Caco-2 (cell line): ENCODE measurements at regions of chr5 and their contacts with region 1.

Region 1: GRCh38 chr5:180810210-180810958 is 7.8 kb upstream of the MGAT1 start:
- DNase-seq: peak; percentile 96 to 97
- H3K4me3 ChIP-seq: peak overlapping the region; percentile 64
- H3K4me3 Mint-ChIP-seq: peak overlapping the region; percentile 84
- H3K27ac Mint-ChIP-seq: peak overlapping the region; percentile 66
- H3K4me1 ChIP-seq: peaks cover 42% of the 10 kb centered on the region
- H3K4me1 Mint-ChIP-seq: peaks cover 62% of the 10 kb centered on the region
- H3K27me3 ChIP-seq: no peaks in the 10 kb centered on the region
- H3K27me3 Mint-ChIP-seq: no peaks in the 10 kb centered on the region
- CTCF ChIP-seq: no peak

Region 2: DNA sequence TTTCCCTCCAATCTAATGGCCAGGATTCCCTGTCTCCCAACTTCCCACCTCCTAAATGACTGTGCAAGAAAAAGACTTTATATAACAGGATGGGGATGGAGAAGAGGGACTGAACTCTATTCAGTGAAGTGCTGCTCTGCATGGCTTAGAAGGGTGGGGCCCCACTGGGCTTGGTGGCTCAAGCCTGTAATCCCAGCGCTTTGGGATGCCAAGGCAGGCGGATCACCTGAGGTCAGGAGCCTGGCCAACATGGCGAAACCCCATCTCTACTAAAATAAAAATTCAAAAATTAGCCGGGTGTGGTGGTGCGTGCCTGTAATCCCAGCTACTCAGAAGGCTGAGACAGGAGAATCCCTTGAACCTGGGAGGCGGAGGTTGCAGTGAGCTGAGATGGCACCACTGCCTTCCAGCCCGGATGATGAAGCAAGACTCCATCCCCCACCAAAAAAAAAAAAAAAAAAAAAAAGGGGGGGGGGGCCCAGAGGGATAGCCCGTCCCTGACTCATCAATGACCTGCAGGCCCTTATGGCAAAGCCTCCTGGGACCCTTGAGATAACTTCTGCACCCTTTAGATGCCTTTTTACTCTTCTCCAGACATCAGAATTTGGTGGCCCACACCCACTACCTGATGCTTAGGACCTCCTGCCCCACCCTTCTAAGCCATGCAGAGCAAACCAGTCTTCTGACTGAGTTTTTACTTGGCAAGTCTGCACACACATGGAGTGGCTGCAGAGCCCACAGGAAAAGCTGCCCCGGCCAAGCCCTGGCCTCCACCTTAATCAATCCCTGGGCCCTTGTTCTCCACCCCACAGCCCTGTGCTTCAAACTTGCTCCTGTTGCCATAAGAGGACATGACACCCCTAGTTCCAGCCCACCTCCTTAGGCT is 13.2 kb before region 1 on chr5:
- CTCF ChIA-PET with region 1: interaction called, 3 read pairs
- POLR2A ChIA-PET with region 1: interaction called, 12 read pairs
- intact Hi-C with region 1: loop called (anchors 1 kb)
- DNase-seq: no peak
- H3K4me3 ChIP-seq: no peak overlapping the region
- H3K4me3 Mint-ChIP-seq: no peak overlapping the region
- H3K27ac Mint-ChIP-seq: no peak overlapping the region
- H3K4me1 ChIP-seq: peaks cover 29% of the 10 kb centered on the region
- H3K4me1 Mint-ChIP-seq: peaks cover 27% of the 10 kb centered on the region
- H3K27me3 ChIP-seq: no peaks in the 10 kb centered on the region
- H3K27me3 Mint-ChIP-seq: no peaks in the 10 kb centered on the region
- CTCF ChIP-seq: no peak

Region 3: GRCh38 chr5:180831139-180832048 is 21.0 kb after region 1 on chr5:
- CTCF ChIA-PET with region 1: no interaction called
- POLR2A ChIA-PET with region 1: interaction called, 13 read pairs
- intact Hi-C with region 1: loop called (anchors 2 kb)
- DNase-seq: peak; percentile 83 to 89
- H3K4me3 ChIP-seq: peak overlapping the region; percentile 76
- H3K4me3 Mint-ChIP-seq: peak overlapping the region; percentile 97
- H3K27ac Mint-ChIP-seq: peak overlapping the region; percentile 98
- H3K4me1 ChIP-seq: peaks cover 14% of the 10 kb centered on the region
- H3K4me1 Mint-ChIP-seq: peaks cover 17% of the 10 kb centered on the region
- H3K27me3 ChIP-seq: no peaks in the 10 kb centered on the region
- H3K27me3 Mint-ChIP-seq: no peaks in the 10 kb centered on the region
- CTCF ChIP-seq: peak in 1 of 2 experiments; percentile 8

Region 4: GRCh38 chr5:180874804-180875582 is 64.6 kb after region 1 on chr5:
- CTCF ChIA-PET with region 1: no interaction called
- POLR2A ChIA-PET with region 1: no interaction called
- intact Hi-C with region 1: no loop called
- DNase-seq: no peak
- H3K4me3 ChIP-seq: no peak overlapping the region
- H3K4me3 Mint-ChIP-seq: no peak overlapping the region
- H3K27ac Mint-ChIP-seq: no peak overlapping the region
- H3K4me1 ChIP-seq: no peaks in the 10 kb centered on the region
- H3K4me1 Mint-ChIP-seq: no peaks in the 10 kb centered on the region
- H3K27me3 ChIP-seq: no peaks in the 10 kb centered on the region
- H3K27me3 Mint-ChIP-seq: no peaks in the 10 kb centered on the region
- CTCF ChIP-seq: no peak